ENCODE measurements at regions of chr7 and their contacts with region 1.

Region 1: GRCh38 chr7:32204361-32205018 is 134.3 kb upstream of the PDE1C start:
- DNase-seq: peak; percentile 4 to 28
- H3K4me3 ChIP-seq: no peak overlapping the region
- H3K27ac ChIP-seq: no peak overlapping the region
- H3K4me1 ChIP-seq: no peaks in the 10 kb centered on the region
- H3K27me3 ChIP-seq: no peaks in the 10 kb centered on the region
- CTCF ChIP-seq: peak in 3 of 6 experiments; percentile 41 to 50 (median 48)
- POLR2A ChIP-seq: no peak

Region 2: GRCh38 chr7:31744294-31744874 is 460.1 kb before region 1 on chr7:
- intact Hi-C with region 1: loop called (anchors 10 kb)
- DNase-seq: peak; percentile 52 to 65
- H3K4me3 ChIP-seq: no peak overlapping the region
- H3K27ac ChIP-seq: no peak overlapping the region
- H3K4me1 ChIP-seq: no peaks in the 10 kb centered on the region
- H3K27me3 ChIP-seq: no peaks in the 10 kb centered on the region
- CTCF ChIP-seq: peak; percentile 49 to 82 (median 70)
- POLR2A ChIP-seq: no peak

Region 3: DNA sequence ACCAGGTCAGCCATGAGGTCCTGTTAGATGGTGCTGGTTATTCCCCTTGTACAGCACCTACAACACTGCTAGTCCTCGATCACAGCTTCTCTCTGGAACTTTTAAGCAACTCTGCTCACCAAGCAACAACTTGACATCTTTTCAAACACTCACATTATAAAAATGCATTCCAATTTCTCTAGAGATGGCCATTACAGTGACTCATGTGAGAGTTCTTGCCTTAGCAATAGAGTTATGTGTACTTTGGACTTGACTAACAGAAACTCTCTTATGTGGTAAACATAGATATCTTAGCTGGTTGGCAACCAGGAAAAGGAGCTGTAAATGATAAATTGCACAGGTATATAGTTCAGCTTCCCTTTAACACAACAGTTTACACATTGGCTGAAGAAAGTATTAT is 256.5 kb before region 1 on chr7:
- intact Hi-C with region 1: no loop called
- DNase-seq: no peak
- H3K4me3 ChIP-seq: no peak overlapping the region
- H3K27ac ChIP-seq: no peak overlapping the region
- H3K4me1 ChIP-seq: no peaks in the 10 kb centered on the region
- H3K27me3 ChIP-seq: no peaks in the 10 kb centered on the region
- CTCF ChIP-seq: no peak
- POLR2A ChIP-seq: no peak

Measured in thyroid gland (tissue), 4 donors.